Ascending aorta (tissue), 2 donors: ENCODE measurements at regions of chr16 and their contacts with region 1.

Region 1: GRCh38 chr16:89217388-89218191 is at the start of gene ZNF778:
- DNase-seq: peak; percentile 21 to 90
- H3K4me3 ChIP-seq: peak within 1 kb of the TSS; percentile 75 to 83
- H3K27ac ChIP-seq: peak within 1 kb of the TSS; percentile 91 to 96
- H3K4me1 ChIP-seq: peaks cover 7 to 21% of the 10 kb centered on the region in 2 donors
- H3K27me3 ChIP-seq: no peaks in the 10 kb centered on the region
- CTCF ChIP-seq: peak in 1 of 3 experiments; percentile 5
- total RNA-seq, gene ZNF778: 1.5 TPM

Region 2: GRCh38 chr16:88811769-88812512 is 405.6 kb before region 1 on chr16 and contains the start of gene APRT:
- intact Hi-C with region 1: loop called (anchors 2 kb)
- DNase-seq: peak; percentile 65 to 96
- H3K4me3 ChIP-seq: peak within 1 kb of the TSS; percentile 80 to 83
- H3K27ac ChIP-seq: peak within 1 kb of the TSS; percentile 86 to 93
- H3K4me1 ChIP-seq: peaks cover 8 to 21% of the 10 kb centered on the region in 2 donors
- H3K27me3 ChIP-seq: no peaks in the 10 kb centered on the region
- CTCF ChIP-seq: peak in 2 of 3 experiments; percentile 41 to 44
- total RNA-seq, gene APRT: 305 TPM

Region 3: DNA sequence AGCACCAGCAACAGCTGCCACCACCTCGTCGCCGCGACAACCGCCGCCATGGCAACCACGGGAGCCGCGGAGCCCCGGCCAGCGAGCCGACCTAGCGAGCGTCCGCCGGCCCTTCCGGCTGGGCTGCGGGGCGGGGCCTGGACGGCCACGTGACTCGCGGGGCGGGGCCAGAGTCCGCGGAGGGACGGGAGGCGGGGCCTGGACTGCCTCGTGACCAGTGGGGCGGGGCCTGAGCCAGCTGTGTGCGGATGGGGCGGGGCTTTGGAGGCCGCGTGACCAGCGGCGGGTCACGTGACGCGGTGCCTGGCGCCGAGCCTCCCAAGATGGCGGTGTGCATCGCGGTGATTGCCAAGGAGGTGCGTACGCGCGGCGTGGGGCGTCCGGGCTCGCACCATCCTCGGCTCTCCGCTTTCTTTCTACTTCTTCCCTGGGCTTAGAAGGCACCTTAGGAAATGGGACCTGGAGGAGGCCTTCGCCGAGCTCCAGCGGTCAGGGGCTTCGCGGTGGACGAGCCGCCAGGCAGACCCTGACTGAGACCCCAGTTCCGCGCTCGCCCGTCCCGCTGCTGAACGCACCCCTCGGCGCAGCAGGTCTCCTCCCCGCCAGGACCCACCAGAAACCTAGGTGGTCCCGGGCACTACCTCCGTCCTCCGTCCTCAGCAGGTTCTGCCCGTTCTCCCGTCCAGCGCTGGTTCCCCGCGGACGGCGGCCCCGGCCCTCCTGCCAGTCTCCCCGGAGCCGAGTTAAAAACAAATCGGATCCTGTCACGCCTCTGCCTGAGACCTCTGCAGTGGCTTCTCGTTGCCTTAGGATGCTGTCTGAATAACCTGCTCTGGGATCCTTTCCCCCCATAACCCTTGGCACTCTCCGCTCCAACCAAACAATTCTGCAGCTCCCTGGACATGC is 360.5 kb before region 1 on chr16 and contains the starts of genes GALNS and TRAPPC2L:
- intact Hi-C with region 1: loop called (anchors 1 kb)
- DNase-seq: peak; percentile 92 to 99
- H3K4me3 ChIP-seq: peak within 1 kb of the TSS; percentile 64 to 87
- H3K27ac ChIP-seq: peak within 1 kb of the TSS; percentile 54 to 66
- H3K4me1 ChIP-seq: peaks cover 13 to 14% of the 10 kb centered on the region in 2 donors
- H3K27me3 ChIP-seq: no peaks in the 10 kb centered on the region
- CTCF ChIP-seq: no peak
- total RNA-seq, gene GALNS: 62.2 TPM
- total RNA-seq, gene TRAPPC2L: 7.6 TPM

Region 4: DNA sequence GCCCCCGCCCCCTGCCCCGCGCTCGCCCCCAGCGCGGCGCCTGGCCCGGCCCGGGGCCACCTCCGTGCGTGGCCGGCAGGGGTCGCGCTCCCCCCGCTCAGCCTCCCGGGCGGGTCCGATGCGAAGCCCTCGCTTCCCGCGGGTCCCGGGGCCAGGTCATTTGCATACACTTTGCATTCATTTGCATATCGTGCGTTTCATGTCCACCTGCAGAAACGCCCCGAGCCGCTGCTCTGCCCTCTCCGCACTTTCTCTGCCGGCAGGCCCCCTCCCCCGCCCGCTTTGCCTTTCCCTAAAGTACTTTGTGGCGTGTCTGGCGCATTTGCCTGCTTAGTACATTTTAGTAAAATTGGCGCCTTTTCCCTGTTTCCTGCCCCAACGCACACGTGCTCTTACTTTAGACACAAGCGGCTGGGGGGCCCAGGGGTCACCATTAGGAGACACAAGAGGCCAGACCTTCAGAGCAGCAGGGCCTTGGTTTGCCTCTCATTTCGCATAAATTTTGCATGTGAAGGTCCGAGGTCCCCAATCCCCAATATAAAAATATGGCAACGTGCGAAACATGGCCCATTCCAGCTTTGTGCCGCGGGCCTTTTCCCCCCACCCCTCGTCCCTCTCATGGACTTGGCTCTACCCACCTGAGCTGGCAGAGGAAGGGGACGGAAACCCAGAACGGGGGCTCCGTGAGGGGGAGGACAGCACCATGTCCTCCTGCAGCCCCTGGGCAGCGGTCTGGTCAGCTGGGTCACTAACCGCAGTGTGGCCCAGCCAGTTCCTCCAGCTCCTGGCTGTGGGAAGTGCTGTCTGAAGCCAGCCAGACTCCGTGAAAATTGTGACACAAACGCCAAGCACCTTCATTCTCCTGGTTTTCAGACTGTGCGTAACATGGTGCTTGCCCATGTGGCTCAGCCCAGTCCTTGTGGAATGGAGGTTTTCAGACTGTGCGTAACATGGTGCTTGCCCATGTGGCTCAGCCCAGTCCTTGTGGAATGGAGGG is 275.4 kb before region 1 on chr16:
- intact Hi-C with region 1: loop called (anchors 2 kb)
- DNase-seq: no peak
- H3K4me3 ChIP-seq: peak overlapping the region; percentile 26 to 56
- H3K27ac ChIP-seq: no peak overlapping the region
- H3K4me1 ChIP-seq: peaks cover 2 to 6% of the 10 kb centered on the region in 2 donors
- H3K27me3 ChIP-seq: peaks cover 7% of the 10 kb centered on the region
- CTCF ChIP-seq: peak; percentile 24 to 57 (median 43)

Region 5: GRCh38 chr16:89093602-89094251 is 123.9 kb before region 1 on chr16 and contains the start of gene ACSF3:
- intact Hi-C with region 1: loop called (anchors 10 kb)
- DNase-seq: peak in 1 of 2 donors; percentile 75
- H3K4me3 ChIP-seq: peak within 1 kb of the TSS; percentile 93
- H3K27ac ChIP-seq: peak within 1 kb of the TSS; percentile 32 to 70
- H3K4me1 ChIP-seq: peaks cover 0 to 21% of the 10 kb centered on the region in 2 donors
- H3K27me3 ChIP-seq: no peaks in the 10 kb centered on the region
- CTCF ChIP-seq: peak in 1 of 3 experiments; percentile 4
- total RNA-seq, gene ACSF3: 5.2 TPM